ENCODE measurements at regions of chrX and their contacts with region 1.

Region 1: GRCh38 chrX:130120746-130121504 is 10.6 kb upstream of the ELF4 start:
- DNase-seq: peak; percentile 81
- ATAC-seq: peak; percentile 84
- H3K4me3 ChIP-seq: peak overlapping the region in 4 of 5 experiments; percentile 35 to 62 (median 48)
- H3K4me3 Mint-ChIP-seq: peak overlapping the region; percentile 82
- H3K27ac ChIP-seq: no peak overlapping the region
- H3K27ac Mint-ChIP-seq: no peak overlapping the region
- H3K4me1 ChIP-seq: peaks cover 5 to 15% of the 10 kb centered on the region in 2 donors
- H3K4me1 Mint-ChIP-seq: peaks cover 10% of the 10 kb centered on the region
- H3K27me3 ChIP-seq: no peaks in the 10 kb centered on the region
- H3K27me3 Mint-ChIP-seq: no peaks in the 10 kb centered on the region
- CTCF ChIP-seq: peak; percentile 82

Region 2: GRCh38 chrX:130086447-130087206 is 34.3 kb before region 1 on chrX:
- CTCF ChIA-PET with region 1: interaction called, 164 read pairs
- POLR2A ChIA-PET with region 1: interaction called, 7 read pairs
- intact Hi-C with region 1: loop called (anchors 1 kb)
- DNase-seq: peak; percentile 59
- ATAC-seq: peak; percentile 45
- H3K4me3 ChIP-seq: peak overlapping the region; percentile 21 to 48 (median 36)
- H3K4me3 Mint-ChIP-seq: peak overlapping the region; percentile 83
- H3K27ac ChIP-seq: peak overlapping the region; percentile 28 to 74
- H3K27ac Mint-ChIP-seq: peak overlapping the region; percentile 85
- H3K4me1 ChIP-seq: peaks cover 78 to 95% of the 10 kb centered on the region in 2 donors
- H3K4me1 Mint-ChIP-seq: peaks cover 76% of the 10 kb centered on the region
- H3K27me3 ChIP-seq: no peaks in the 10 kb centered on the region
- H3K27me3 Mint-ChIP-seq: no peaks in the 10 kb centered on the region
- CTCF ChIP-seq: no peak

Region 3: GRCh38 chrX:130110379-130111219 is 10.3 kb before region 1 on chrX and contains the start of gene ELF4:
- CTCF ChIA-PET with region 1: interaction called, 5 read pairs
- POLR2A ChIA-PET with region 1: no interaction called
- intact Hi-C with region 1: loop called (anchors 1 kb)
- DNase-seq: peak; percentile 71
- ATAC-seq: peak; percentile 64
- H3K4me3 ChIP-seq: peak within 1 kb of the TSS; percentile 47 to 72 (median 67)
- H3K4me3 Mint-ChIP-seq: peak within 1 kb of the TSS; percentile 94
- H3K27ac ChIP-seq: peak within 1 kb of the TSS; percentile 54 to 86
- H3K27ac Mint-ChIP-seq: peak within 1 kb of the TSS; percentile 93
- H3K4me1 ChIP-seq: peaks cover 13 to 19% of the 10 kb centered on the region in 2 donors
- H3K4me1 Mint-ChIP-seq: peaks cover 29% of the 10 kb centered on the region
- H3K27me3 ChIP-seq: no peaks in the 10 kb centered on the region
- H3K27me3 Mint-ChIP-seq: no peaks in the 10 kb centered on the region
- CTCF ChIP-seq: no peak
- total RNA-seq, gene ELF4: 26.3 and 26.5 TPM in 2 replicates

Region 4: DNA sequence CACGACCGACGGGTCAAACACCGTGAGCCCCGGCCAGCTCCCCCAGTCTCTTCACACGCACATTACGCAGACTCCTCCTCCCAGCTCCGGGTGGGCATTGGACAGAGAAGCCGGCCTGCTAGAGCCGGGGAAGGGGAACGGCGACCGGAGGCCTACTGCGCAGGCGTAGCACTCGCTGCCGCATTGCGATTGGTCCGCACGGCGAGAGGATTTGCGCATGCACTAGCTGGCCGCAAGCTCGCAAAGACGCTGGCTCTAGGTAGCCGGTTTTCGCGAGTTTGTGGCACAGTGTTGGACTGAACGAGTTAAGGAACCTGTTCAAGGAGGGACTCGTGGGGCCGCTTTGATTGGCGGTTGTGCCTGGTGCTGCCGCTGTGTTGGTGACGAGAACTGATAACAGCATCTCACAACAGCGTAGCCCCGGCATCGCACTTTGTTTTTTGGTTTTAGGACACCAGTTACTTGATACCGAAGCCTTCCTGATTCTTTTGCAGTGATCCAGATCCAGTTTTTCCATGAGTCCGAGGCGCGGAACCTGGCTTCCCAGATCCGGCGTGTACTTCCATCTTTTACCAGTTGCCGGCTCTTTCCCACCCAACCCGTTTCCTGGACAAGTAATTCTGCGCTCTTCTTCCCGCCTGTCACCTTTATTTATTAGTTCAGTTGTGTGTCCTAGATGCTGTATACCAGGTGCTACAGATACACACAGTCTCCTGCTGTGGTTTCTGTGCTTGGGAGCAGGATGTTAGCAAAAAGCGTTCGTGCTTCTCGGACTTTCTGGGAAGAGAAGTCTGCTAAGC is 45.0 kb after region 1 on chrX and contains the start of gene AIFM1:
- CTCF ChIA-PET with region 1: interaction called, 3 read pairs
- POLR2A ChIA-PET with region 1: no interaction called
- intact Hi-C with region 1: loop called (anchors 2 kb)
- DNase-seq: peak; percentile 92
- ATAC-seq: peak; percentile 88
- H3K4me3 ChIP-seq: peak within 1 kb of the TSS; percentile 61 to 76 (median 66)
- H3K4me3 Mint-ChIP-seq: peak within 1 kb of the TSS; percentile 95
- H3K27ac ChIP-seq: peak within 1 kb of the TSS; percentile 54 to 77
- H3K27ac Mint-ChIP-seq: peak within 1 kb of the TSS; percentile 96
- H3K4me1 ChIP-seq: peaks cover 13 to 21% of the 10 kb centered on the region in 2 donors
- H3K4me1 Mint-ChIP-seq: peaks cover 31% of the 10 kb centered on the region
- H3K27me3 ChIP-seq: no peaks in the 10 kb centered on the region
- H3K27me3 Mint-ChIP-seq: no peaks in the 10 kb centered on the region
- CTCF ChIP-seq: no peak
- total RNA-seq, gene AIFM1: 14.8 and 15.9 TPM in 2 replicates

Region 5: DNA sequence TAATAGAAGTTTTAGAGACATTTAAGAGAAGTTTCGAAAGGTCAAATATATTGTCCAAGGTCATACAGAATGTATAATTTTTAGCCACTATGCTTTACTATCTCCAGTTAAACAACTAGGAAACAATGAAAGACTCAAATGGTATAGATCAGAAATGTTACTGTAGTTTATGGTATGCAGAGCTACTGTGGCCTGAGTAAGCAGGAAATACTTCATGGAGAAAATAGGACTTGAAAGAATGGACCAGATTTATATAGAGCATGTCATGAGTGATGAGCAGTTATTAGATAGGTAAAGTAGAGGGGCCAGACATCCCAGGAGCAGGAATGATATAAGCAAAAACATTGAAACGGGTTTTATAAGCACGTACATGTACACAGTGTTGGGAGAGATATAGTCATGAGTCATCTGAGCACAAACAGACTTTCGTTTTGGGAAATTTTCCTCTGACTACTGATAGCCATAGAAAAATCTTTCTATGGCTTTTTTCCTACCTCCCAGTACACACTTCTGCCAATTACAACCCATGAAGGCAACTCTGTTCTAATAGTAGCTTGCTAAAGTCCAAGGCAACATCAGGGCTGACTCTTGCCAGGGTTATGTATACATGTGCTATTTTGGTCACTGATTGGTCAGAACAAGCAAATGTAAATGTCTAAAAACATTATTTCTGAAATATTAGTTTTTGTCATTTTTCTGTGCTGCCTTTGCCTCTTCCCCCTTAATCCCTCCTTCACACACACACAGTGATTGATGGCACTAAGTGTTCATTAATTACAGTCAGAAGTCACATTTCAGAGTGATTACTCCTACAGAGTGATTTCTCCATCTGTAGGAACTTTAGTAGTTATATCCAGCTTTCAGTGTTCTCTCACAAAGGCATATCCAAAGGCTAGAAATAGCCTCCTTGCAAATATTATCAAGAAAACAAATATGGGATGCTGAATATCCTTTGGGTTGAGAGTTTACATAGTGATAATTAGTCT is 583.4 kb after region 1 on chrX:
- CTCF ChIA-PET with region 1: no interaction called
- POLR2A ChIA-PET with region 1: no interaction called
- intact Hi-C with region 1: no loop called
- DNase-seq: no peak
- ATAC-seq: no peak
- H3K4me3 ChIP-seq: no peak overlapping the region
- H3K4me3 Mint-ChIP-seq: no peak overlapping the region
- H3K27ac ChIP-seq: no peak overlapping the region
- H3K27ac Mint-ChIP-seq: no peak overlapping the region
- H3K4me1 ChIP-seq: no peaks in the 10 kb centered on the region
- H3K4me1 Mint-ChIP-seq: no peaks in the 10 kb centered on the region
- H3K27me3 ChIP-seq: no peaks in the 10 kb centered on the region
- H3K27me3 Mint-ChIP-seq: no peaks in the 10 kb centered on the region
- CTCF ChIP-seq: no peak

Measured in B cell (primary cell).